CD8-positive, alpha-beta T cell (primary cell): ENCODE measurements at regions of chr11 and their contacts with region 1.

Region 1: DNA sequence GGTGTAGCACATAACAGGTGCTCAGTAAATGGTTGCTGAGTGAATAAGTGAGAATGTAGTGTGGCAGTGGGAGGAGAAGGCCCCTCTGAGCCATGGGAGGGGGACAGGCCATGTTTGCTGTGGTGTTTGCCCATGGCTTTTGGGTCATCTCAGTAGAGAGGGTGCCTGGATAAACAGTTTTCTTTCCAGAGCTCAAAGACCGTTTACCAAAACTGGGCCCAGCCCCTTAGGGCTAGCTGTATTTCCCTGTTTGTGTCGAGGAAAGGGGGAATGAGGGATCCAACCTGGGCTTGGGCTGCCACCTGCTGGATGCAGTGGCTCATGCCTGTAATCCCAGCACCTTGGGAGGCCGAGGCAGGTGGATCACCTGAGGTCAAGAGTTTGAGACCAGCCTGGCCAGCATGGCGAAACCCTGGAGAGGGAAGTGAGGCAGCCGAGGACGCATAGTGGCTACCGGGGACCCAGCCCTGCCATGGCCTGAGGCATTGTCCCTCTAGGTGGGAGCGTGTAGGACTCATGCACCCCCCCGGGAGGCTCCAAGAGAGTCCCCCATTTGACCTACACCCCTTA is 8.7 kb upstream of the LTO1 start:
- DNase-seq: no peak
- ATAC-seq: no peak
- H3K4me3 ChIP-seq: no peak overlapping the region
- H3K4me3 Mint-ChIP-seq: no peak overlapping the region
- H3K27ac ChIP-seq: no peak overlapping the region
- H3K27ac Mint-ChIP-seq: no peak overlapping the region
- H3K4me1 ChIP-seq: no peaks in the 10 kb centered on the region
- H3K4me1 Mint-ChIP-seq: peaks cover 2% of the 10 kb centered on the region
- H3K27me3 ChIP-seq: no peaks in the 10 kb centered on the region
- H3K27me3 Mint-ChIP-seq: peaks cover 11% of the 10 kb centered on the region
- CTCF ChIP-seq: no peak

Region 2: GRCh38 chr11:69801519-69802335 is 117.9 kb after region 1 on chr11:
- CTCF ChIA-PET with region 1: no interaction called
- POLR2A ChIA-PET with region 1: no interaction called
- intact Hi-C with region 1: loop called in 1 of 2 experiments (anchors 1 kb)
- DNase-seq: peak in 7 of 9 experiments; percentile 11 to 51 (median 40)
- ATAC-seq: no peak
- H3K4me3 ChIP-seq: no peak overlapping the region
- H3K4me3 Mint-ChIP-seq: no peak overlapping the region
- H3K27ac ChIP-seq: no peak overlapping the region
- H3K27ac Mint-ChIP-seq: no peak overlapping the region
- H3K4me1 ChIP-seq: no peaks in the 10 kb centered on the region
- H3K4me1 Mint-ChIP-seq: no peaks in the 10 kb centered on the region
- H3K27me3 ChIP-seq: no peaks in the 10 kb centered on the region
- H3K27me3 Mint-ChIP-seq: peaks cover 9% of the 10 kb centered on the region
- CTCF ChIP-seq: peak; percentile 52

Region 3: GRCh38 chr11:69841859-69842698 is 158.2 kb after region 1 on chr11:
- CTCF ChIA-PET with region 1: interaction called, 3 read pairs
- POLR2A ChIA-PET with region 1: no interaction called
- intact Hi-C with region 1: loop called in 1 of 2 experiments (anchors 2 kb)
- DNase-seq: peak in 3 of 9 experiments; percentile 14 to 38 (median 23)
- ATAC-seq: no peak
- H3K4me3 ChIP-seq: no peak overlapping the region
- H3K4me3 Mint-ChIP-seq: no peak overlapping the region
- H3K27ac ChIP-seq: no peak overlapping the region
- H3K27ac Mint-ChIP-seq: no peak overlapping the region
- H3K4me1 ChIP-seq: no peaks in the 10 kb centered on the region
- H3K4me1 Mint-ChIP-seq: no peaks in the 10 kb centered on the region
- H3K27me3 ChIP-seq: peaks cover 0 to 7% of the 10 kb centered on the region in 2 experiments
- H3K27me3 Mint-ChIP-seq: peaks cover 18% of the 10 kb centered on the region
- CTCF ChIP-seq: no peak

Region 4: DNA sequence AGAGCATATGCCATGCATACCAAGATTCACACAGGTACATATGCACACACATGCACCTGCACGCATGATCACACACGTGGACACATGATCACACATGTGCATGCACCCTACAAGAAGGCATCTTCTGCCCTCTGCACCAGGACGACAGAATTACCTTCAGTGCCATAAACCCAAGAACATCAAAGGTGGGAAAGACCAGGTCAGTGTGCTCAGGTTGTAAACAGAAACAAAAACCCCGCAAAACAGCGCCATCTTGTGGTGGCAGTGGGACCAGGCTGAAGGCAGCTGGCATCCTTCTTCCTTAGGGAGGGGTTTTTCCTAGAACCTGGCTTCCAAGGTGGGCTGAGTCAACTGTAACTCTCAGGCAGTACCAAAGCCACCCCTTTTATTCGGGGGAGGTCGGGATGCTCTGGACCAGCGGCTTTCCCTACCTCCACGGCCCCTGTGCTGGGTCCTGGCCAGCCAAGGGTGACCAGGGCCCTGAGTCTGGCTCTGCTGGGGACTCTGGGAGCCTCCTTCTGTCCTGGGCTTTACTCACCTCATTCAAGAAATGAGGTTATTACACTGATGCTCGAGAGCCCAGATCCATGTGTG is 204.7 kb after region 1 on chr11:
- CTCF ChIA-PET with region 1: interaction called, 8 read pairs
- POLR2A ChIA-PET with region 1: no interaction called
- intact Hi-C with region 1: loop called in 1 of 2 experiments (anchors 1 kb)
- DNase-seq: peak; percentile 25 to 77 (median 66)
- ATAC-seq: peak; percentile 40
- H3K4me3 ChIP-seq: no peak overlapping the region
- H3K4me3 Mint-ChIP-seq: no peak overlapping the region
- H3K27ac ChIP-seq: no peak overlapping the region
- H3K27ac Mint-ChIP-seq: no peak overlapping the region
- H3K4me1 ChIP-seq: no peaks in the 10 kb centered on the region
- H3K4me1 Mint-ChIP-seq: no peaks in the 10 kb centered on the region
- H3K27me3 ChIP-seq: no peaks in the 10 kb centered on the region
- H3K27me3 Mint-ChIP-seq: peaks cover 27% of the 10 kb centered on the region
- CTCF ChIP-seq: peak; percentile 78

Region 5: DNA sequence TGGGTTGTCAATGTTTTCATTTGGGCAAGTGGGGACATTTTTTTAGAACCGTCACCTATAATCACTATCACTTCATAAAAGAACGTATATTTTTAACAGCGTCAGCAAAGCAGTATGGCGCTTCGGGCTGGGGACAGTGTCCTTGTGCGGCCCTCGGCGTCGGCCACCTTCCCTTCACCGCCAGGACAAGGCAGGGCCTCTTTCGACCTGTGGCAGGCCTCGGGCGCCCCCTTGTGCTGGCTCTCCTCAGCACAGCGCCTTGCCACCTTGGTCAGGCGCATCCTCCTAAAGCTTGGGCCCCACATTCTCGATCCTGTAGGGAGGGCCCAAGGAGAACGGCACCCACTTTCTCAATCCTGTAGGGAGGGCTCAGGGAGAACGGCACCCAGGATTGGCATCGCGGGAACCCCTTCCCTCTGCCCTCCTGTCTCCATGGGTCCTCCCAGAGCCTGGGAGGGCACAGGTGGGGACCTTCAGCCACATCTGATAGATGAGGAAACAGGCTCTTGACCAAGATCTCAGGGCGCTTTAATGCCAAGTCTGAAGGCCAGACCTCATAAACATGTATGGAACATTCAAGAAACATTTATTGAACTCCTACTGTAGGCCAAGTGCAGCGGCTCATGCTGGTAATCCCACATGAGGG is 507.8 kb after region 1 on chr11:
- CTCF ChIA-PET with region 1: no interaction called
- POLR2A ChIA-PET with region 1: no interaction called
- intact Hi-C with region 1: loop called in 1 of 2 experiments (anchors 2 kb)
- DNase-seq: peak in 7 of 9 experiments; percentile 28 to 57 (median 52)
- ATAC-seq: peak; percentile 62
- H3K4me3 ChIP-seq: no peak overlapping the region
- H3K4me3 Mint-ChIP-seq: no peak overlapping the region
- H3K27ac ChIP-seq: no peak overlapping the region
- H3K27ac Mint-ChIP-seq: no peak overlapping the region
- H3K4me1 ChIP-seq: no peaks in the 10 kb centered on the region
- H3K4me1 Mint-ChIP-seq: peaks cover 2% of the 10 kb centered on the region
- H3K27me3 ChIP-seq: peaks cover 0 to 5% of the 10 kb centered on the region in 2 experiments
- H3K27me3 Mint-ChIP-seq: peaks cover 9% of the 10 kb centered on the region
- CTCF ChIP-seq: peak; percentile 16

Region 6: GRCh38 chr11:70467201-70468085 is 783.6 kb after region 1 on chr11:
- CTCF ChIA-PET with region 1: no interaction called
- POLR2A ChIA-PET with region 1: no interaction called
- intact Hi-C with region 1: loop called in 1 of 2 experiments (anchors 5 kb)
- DNase-seq: peak in 3 of 9 experiments; percentile 8 to 27 (median 22)
- ATAC-seq: no peak
- H3K4me3 ChIP-seq: no peak overlapping the region
- H3K4me3 Mint-ChIP-seq: no peak overlapping the region
- H3K27ac ChIP-seq: no peak overlapping the region
- H3K27ac Mint-ChIP-seq: no peak overlapping the region
- H3K4me1 ChIP-seq: no peaks in the 10 kb centered on the region
- H3K4me1 Mint-ChIP-seq: no peaks in the 10 kb centered on the region
- H3K27me3 ChIP-seq: no peaks in the 10 kb centered on the region
- H3K27me3 Mint-ChIP-seq: peaks cover 9% of the 10 kb centered on the region
- CTCF ChIP-seq: peak; percentile 56

Region 7: DNA sequence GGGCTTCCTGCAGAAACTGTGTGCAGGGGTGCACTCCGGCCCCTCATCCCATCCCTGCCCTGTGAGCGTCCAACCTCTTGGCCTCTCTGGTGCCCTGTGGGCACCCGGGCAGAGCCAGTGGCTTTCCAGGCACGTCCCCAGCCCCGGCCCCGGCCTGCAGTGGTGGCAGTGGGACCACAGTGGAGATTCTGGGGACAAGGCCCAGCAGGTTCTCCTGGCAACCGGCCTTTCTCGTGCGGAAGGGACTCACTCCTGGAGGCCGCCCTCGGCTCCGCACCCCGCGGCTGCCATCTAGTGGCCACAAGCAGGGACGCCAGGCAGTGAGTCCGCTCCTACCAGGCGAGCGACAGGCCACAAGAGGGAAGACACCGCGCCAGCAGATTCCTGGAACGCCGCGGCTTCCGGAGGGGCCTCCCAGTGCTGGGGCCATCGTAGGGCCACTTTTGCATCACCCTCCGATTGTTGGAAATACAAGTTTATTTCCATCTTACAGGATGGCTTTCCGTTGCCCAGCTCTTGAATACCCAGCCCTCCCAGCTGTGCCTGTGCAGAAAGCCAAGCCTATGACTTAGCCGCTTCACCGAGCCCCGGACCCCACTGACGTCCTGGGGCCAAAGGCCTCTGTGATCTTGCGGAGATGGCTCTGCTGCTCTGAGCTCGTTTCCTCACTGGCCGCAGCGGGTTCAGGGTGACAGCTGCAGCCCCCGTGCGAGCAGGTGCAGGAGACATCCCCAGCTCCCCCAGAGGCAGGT is 1071.7 kb after region 1 on chr11:
- CTCF ChIA-PET with region 1: no interaction called
- POLR2A ChIA-PET with region 1: no interaction called
- intact Hi-C with region 1: loop called in 1 of 2 experiments (anchors 10 kb)
- DNase-seq: peak; percentile 8 to 66 (median 47)
- ATAC-seq: no peak
- H3K4me3 ChIP-seq: no peak overlapping the region
- H3K4me3 Mint-ChIP-seq: no peak overlapping the region
- H3K27ac ChIP-seq: no peak overlapping the region
- H3K27ac Mint-ChIP-seq: no peak overlapping the region
- H3K4me1 ChIP-seq: no peaks in the 10 kb centered on the region
- H3K4me1 Mint-ChIP-seq: no peaks in the 10 kb centered on the region
- H3K27me3 ChIP-seq: peaks cover 0 to 3% of the 10 kb centered on the region in 2 experiments
- H3K27me3 Mint-ChIP-seq: peaks cover 21% of the 10 kb centered on the region
- CTCF ChIP-seq: peak; percentile 74